Natural killer cell (primary cell): ENCODE measurements at regions of chr12 and their contacts with region 1.

Region 1: GRCh38 chr12:48157018-48157888 is at the start of gene ASB8:
- DNase-seq: peak; percentile 99 to 100
- ATAC-seq: peak; percentile 92 to 99 (median 93)
- H3K4me3 ChIP-seq: peak within 1 kb of the TSS; percentile 94
- H3K4me3 Mint-ChIP-seq: peak within 1 kb of the TSS; percentile 96
- H3K27ac ChIP-seq: peak within 1 kb of the TSS; percentile 75
- H3K27ac Mint-ChIP-seq: peak within 1 kb of the TSS; percentile 95 to 98
- H3K4me1 ChIP-seq: peaks cover 15% of the 10 kb centered on the region
- H3K4me1 Mint-ChIP-seq: peaks cover 31 to 36% of the 10 kb centered on the region in 2 donors
- H3K27me3 ChIP-seq: no peaks in the 10 kb centered on the region
- H3K27me3 Mint-ChIP-seq: no peaks in the 10 kb centered on the region
- CTCF ChIP-seq: peak; percentile 62
- total RNA-seq, gene ASB8: 62.9 to 73.8 (median 71.3) TPM

Region 2: GRCh38 chr12:48197971-48198671 is 40.9 kb after region 1 on chr12:
- intact Hi-C with region 1: loop called (anchors 1 kb)
- DNase-seq: peak; percentile 88 to 94
- ATAC-seq: peak; percentile 95 to 99 (median 97)
- H3K4me3 ChIP-seq: peak overlapping the region; percentile 95
- H3K4me3 Mint-ChIP-seq: peak overlapping the region; percentile 90
- H3K27ac ChIP-seq: peak overlapping the region; percentile 98
- H3K27ac Mint-ChIP-seq: peak overlapping the region; percentile 82 to 86
- H3K4me1 ChIP-seq: peaks cover 31% of the 10 kb centered on the region
- H3K4me1 Mint-ChIP-seq: peaks cover 49 to 56% of the 10 kb centered on the region in 2 donors
- H3K27me3 ChIP-seq: peaks cover 6% of the 10 kb centered on the region
- H3K27me3 Mint-ChIP-seq: peaks cover 22% of the 10 kb centered on the region in 2 donors
- CTCF ChIP-seq: no peak

Region 3: DNA sequence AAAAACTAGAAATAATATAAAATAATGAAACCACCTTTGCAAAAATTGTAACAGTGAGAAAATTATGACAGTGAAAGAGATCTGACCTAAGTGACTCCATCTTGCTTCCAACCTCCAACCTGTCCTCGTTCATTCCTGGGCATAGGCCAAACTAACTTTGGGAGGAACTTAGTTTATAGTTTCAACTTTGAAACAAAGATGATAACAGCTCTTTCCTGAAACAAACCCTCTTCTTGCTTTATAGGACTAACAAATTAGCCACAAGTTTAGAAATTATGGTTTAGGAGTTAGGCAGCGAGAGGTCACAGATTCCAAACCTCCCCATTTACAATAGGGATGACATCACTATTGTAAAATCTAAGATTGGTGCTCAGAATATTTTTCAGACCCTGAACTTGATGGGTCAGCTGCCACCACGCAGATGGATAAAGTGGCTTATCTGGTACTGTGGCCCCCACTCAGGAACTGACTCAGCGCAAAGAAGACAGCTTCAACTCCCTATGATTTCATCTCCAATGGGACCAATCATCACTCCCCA is 78.6 kb after region 1 on chr12:
- intact Hi-C with region 1: no loop called
- DNase-seq: no peak
- ATAC-seq: no peak
- H3K4me3 ChIP-seq: no peak overlapping the region
- H3K4me3 Mint-ChIP-seq: no peak overlapping the region
- H3K27ac ChIP-seq: no peak overlapping the region
- H3K27ac Mint-ChIP-seq: no peak overlapping the region
- H3K4me1 ChIP-seq: no peaks in the 10 kb centered on the region
- H3K4me1 Mint-ChIP-seq: no peaks in the 10 kb centered on the region
- H3K27me3 ChIP-seq: no peaks in the 10 kb centered on the region
- H3K27me3 Mint-ChIP-seq: peaks cover 25 to 36% of the 10 kb centered on the region in 2 donors
- CTCF ChIP-seq: no peak